ENCODE measurements at regions of chr4 and their contacts with region 1.

Region 1: DNA sequence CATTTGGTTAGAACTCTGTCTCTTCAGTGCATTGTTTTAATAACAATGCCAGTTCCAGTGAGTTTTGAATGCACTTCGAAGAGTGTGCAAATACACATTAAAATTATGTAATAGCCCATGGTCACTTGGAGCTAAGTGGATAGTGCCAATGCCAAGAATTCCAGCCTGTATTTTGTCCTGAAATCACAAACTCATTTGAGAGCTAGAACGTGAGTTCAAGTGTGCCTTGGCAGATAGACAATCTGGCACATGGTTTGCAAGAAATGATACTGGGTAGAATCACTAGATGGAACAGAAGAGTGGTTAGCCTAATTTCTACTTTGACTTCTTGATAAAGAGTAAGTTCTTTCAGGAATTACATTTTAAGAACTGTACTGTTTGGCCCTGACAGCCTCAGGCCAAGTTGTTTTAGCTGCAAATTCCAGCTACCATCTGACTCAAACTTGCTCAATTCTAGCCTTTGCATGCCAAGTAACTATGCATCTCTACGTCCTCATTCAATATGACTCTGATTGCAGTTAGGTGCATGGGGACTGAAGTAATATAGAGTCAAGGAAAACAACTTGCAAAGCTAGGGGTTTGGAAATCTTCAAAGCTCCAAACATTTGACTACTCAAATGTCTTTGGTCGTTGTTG is 131.9 kb upstream of the SMIM31 start:
- DNase-seq: no peak
- H3K4me3 ChIP-seq: no peak overlapping the region
- H3K27ac ChIP-seq: no peak overlapping the region
- H3K4me1 ChIP-seq: no peaks in the 10 kb centered on the region
- H3K27me3 ChIP-seq: no peaks in the 10 kb centered on the region
- CTCF ChIP-seq: no peak

Region 2: DNA sequence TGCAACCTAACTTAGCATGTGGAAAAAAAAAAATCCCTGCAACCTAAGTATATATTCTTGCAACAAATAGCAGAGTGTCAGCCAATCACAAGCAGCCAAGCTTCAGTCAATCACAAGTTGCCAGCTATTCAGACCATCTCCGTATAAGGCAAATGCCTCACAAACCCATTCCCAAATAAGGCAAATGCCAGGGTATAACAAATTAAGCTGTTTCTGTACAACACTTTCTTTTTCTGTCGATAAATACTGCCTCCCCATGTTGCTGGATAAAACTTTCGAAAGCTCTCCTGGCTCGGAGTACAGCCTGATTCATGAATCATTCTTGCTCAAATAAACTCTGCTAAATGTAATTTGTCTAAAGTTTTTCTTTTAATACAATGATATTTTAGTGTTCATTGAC is 328.8 kb before region 1 on chr4:
- intact Hi-C with region 1: no loop called
- DNase-seq: no peak
- H3K4me3 ChIP-seq: no peak overlapping the region
- H3K27ac ChIP-seq: no peak overlapping the region
- H3K4me1 ChIP-seq: no peaks in the 10 kb centered on the region
- H3K27me3 ChIP-seq: no peaks in the 10 kb centered on the region
- CTCF ChIP-seq: no peak

Region 3: GRCh38 chr4:164484551-164484950 is 137.5 kb before region 1 on chr4:
- intact Hi-C with region 1: loop called (anchors 5 kb)
- DNase-seq: no peak
- H3K4me3 ChIP-seq: no peak overlapping the region
- H3K27ac ChIP-seq: no peak overlapping the region
- H3K4me1 ChIP-seq: no peaks in the 10 kb centered on the region
- H3K27me3 ChIP-seq: no peaks in the 10 kb centered on the region
- CTCF ChIP-seq: no peak

Region 4: GRCh38 chr4:164997324-164997723 is 375.3 kb after region 1 on chr4:
- intact Hi-C with region 1: no loop called
- DNase-seq: no peak
- H3K4me3 ChIP-seq: no peak overlapping the region
- H3K27ac ChIP-seq: no peak overlapping the region
- H3K4me1 ChIP-seq: no peaks in the 10 kb centered on the region
- H3K27me3 ChIP-seq: no peaks in the 10 kb centered on the region
- CTCF ChIP-seq: no peak

Measured in tibial artery (tissue), 4 donors.